CD4-positive, alpha-beta memory T cell (primary cell): ENCODE measurements at regions of chr13 and their contacts with region 1.

Region 1: DNA sequence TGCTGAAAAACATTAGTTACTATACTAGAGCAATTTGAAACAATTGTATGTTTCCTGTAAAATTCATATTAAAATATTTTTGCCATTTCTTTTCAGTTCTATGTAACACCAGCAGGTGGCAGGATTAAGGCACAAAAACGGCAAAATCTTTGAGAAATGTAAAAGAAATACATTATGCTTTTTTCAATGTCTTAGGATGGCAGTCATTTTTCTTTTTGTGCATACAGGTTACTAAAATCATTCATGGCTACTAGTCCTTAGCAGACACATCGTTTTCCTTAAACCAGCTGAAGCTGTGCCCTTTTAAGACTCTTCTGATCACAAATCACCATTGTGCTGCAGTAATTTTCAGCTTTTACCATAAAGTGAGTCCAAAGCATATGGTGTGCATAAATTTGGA is 800.7 kb upstream of the SLITRK5 start:
- DNase-seq: peak in 1 of 5 donors; percentile 6
- H3K4me3 ChIP-seq: no peak overlapping the region
- H3K4me3 Mint-ChIP-seq: no peak overlapping the region
- H3K27ac ChIP-seq: no peak overlapping the region
- H3K27ac Mint-ChIP-seq: no peak overlapping the region
- H3K4me1 ChIP-seq: no peaks in the 10 kb centered on the region
- H3K4me1 Mint-ChIP-seq: no peaks in the 10 kb centered on the region
- H3K27me3 ChIP-seq: no peaks in the 10 kb centered on the region
- H3K27me3 Mint-ChIP-seq: no peaks in the 10 kb centered on the region

Region 2: GRCh38 chr13:86892330-86892729 is 21.9 kb after region 1 on chr13:
- CTCF ChIA-PET with region 1: no interaction called
- POLR2A ChIA-PET with region 1: no interaction called
- intact Hi-C with region 1: no loop called
- DNase-seq: no peak
- H3K4me3 ChIP-seq: no peak overlapping the region
- H3K4me3 Mint-ChIP-seq: no peak overlapping the region
- H3K27ac ChIP-seq: no peak overlapping the region
- H3K27ac Mint-ChIP-seq: no peak overlapping the region
- H3K4me1 ChIP-seq: no peaks in the 10 kb centered on the region
- H3K4me1 Mint-ChIP-seq: no peaks in the 10 kb centered on the region
- H3K27me3 ChIP-seq: no peaks in the 10 kb centered on the region
- H3K27me3 Mint-ChIP-seq: no peaks in the 10 kb centered on the region

Region 3: DNA sequence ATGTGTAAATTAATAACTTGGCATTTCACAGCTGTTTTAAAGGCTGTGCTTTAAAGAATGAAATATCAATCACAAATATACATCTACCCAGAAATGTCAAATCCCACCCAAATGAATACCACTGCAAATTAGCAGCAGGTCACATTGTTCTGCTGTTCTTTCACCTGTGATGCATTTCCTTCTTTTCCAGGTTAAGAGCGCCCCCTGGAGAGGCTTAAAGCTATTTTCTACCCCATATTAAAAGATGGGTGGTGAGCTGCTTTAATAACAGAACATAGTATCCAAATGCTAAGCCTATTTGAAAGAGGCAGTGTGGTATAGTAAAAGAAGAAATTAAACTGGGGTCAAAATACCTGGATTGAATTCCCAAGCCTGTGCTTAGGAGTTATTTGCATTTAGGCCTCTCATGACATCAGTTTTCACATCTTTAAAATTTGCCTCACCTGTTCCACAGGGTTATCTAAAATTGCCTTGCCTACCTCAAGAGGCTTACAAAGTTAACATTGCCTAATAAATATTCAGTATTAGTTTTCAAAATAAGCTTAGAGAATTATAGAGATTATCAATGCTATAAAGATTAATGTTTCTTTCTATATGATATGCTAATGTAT is 403.9 kb after region 1 on chr13:
- CTCF ChIA-PET with region 1: no interaction called
- POLR2A ChIA-PET with region 1: no interaction called
- intact Hi-C with region 1: loop called (anchors 10 kb)
- DNase-seq: peak in 2 of 5 donors; percentile 6 to 9
- H3K4me3 ChIP-seq: no peak overlapping the region
- H3K4me3 Mint-ChIP-seq: no peak overlapping the region
- H3K27ac ChIP-seq: no peak overlapping the region
- H3K27ac Mint-ChIP-seq: no peak overlapping the region
- H3K4me1 ChIP-seq: no peaks in the 10 kb centered on the region
- H3K4me1 Mint-ChIP-seq: no peaks in the 10 kb centered on the region
- H3K27me3 ChIP-seq: no peaks in the 10 kb centered on the region
- H3K27me3 Mint-ChIP-seq: no peaks in the 10 kb centered on the region